Activated T-helper 1 cell treated with anti-CD3 and anti-CD28 coated beads, Interleukin-12 subunit alpha, Interleukin-12 subunit beta, Interleukin-2, Interleukin-4 antibody, amounts not matched to agents 30 ng/mL and 10 ng/mL and 1 ng/mL, durations not matched to agents 14 hours and 24 hours and 36 hours (primary cell): ENCODE measurements at regions of chr9 and their contacts with region 1.

Region 1: DNA sequence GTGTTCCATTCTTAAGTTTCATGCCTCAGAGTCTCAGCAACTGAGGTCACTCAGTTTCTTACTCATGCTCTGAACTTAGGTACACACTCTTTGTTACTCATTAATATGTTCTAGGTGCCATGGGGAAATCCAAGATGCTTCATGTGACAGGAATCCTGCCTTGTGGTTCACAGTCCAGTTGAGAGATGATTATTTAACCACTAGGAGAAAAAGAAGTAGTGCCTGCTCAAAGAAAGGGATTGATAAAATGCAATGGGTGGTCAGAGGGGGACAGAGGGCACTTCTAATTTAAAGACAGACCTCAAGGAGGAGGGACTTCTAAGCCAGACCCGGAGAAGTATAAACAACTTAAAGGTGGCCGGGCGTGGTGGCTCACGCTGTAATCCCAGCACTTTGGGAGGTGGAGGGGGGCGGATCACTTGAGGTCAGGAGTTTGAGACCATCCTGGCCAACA is 69.0 kb downstream of the UGCG start:
- DNase-seq: no peak
- H3K4me3 Mint-ChIP-seq: no peak overlapping the region
- H3K27ac Mint-ChIP-seq: peak overlapping the region; percentile 65
- H3K4me1 Mint-ChIP-seq: peaks cover 7% of the 10 kb centered on the region
- H3K27me3 Mint-ChIP-seq: peaks cover 12% of the 10 kb centered on the region

Region 2: DNA sequence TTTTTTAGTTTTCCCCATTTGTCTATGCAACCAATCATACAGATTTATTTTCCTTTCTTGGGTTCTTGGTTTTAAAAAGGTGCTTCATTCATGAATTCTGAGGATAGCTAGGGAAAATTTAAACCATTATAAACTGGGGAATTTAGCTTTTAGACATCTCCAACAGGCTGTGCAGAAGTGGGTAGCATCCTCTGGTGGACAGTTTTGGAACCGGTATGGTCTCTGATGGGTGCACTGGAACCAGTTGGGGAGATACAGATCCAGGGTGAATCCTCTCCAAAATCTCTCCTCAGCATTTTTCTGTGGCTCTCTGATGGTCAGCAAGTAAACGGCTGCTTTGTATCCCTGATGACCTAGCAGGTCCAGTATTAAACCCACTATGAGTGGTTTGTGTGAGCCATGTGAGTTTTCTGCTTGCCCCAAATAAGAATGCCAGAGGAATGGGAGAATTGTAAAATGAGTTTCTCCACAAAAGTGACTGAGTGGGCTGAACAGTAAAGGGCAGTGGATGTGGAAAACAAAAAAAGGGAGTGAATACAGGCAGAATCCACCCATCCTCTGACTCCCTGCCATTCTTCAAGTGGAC is 343.6 kb before region 1 on chr9:
- intact Hi-C with region 1: no loop called
- DNase-seq: no peak
- H3K4me3 Mint-ChIP-seq: no peak overlapping the region
- H3K27ac Mint-ChIP-seq: no peak overlapping the region
- H3K4me1 Mint-ChIP-seq: no peaks in the 10 kb centered on the region
- H3K27me3 Mint-ChIP-seq: peaks cover 8% of the 10 kb centered on the region

Region 3: GRCh38 chr9:111937781-111938426 is 27.7 kb before region 1 on chr9:
- intact Hi-C with region 1: loop called (anchors 1 kb)
- DNase-seq: peak; percentile 28
- H3K4me3 Mint-ChIP-seq: peak overlapping the region; percentile 63
- H3K27ac Mint-ChIP-seq: peak overlapping the region; percentile 88
- H3K4me1 Mint-ChIP-seq: peaks cover 31% of the 10 kb centered on the region
- H3K27me3 Mint-ChIP-seq: no peaks in the 10 kb centered on the region

Region 4: GRCh38 chr9:112401175-112401815 is 435.7 kb after region 1 on chr9:
- intact Hi-C with region 1: no loop called
- DNase-seq: no peak
- H3K4me3 Mint-ChIP-seq: no peak overlapping the region
- H3K27ac Mint-ChIP-seq: no peak overlapping the region
- H3K4me1 Mint-ChIP-seq: no peaks in the 10 kb centered on the region
- H3K27me3 Mint-ChIP-seq: no peaks in the 10 kb centered on the region